ENCODE measurements at regions of chr4 and their contacts with region 1.

Region 1: DNA sequence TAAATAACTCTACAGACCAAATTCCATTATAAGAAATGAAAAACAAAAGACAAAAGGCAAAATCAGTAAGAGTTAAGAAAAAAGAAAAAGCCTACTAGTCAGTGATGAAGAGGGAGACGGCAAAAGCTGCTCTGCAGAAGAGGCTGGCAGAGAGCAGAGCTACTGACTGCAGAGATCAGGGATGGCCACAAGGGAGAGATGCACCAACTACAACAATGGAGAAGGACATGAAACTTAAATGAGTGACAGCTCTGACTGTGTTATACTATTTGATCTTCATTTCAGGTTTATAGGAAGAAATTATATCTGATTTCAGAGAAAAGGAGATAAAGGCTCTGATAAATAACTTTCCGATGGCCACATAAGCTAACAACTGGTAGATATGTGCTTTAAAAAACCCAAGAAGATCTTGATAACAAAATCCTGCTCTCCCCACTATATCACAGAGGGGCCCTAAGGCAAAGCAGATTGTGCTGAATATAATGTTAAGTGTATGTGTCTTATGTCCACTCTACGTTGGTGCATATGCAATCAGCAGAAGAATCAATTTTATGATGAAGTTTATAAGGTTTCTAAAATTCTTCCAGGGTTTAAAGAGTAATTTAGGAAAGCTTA is 58.4 kb upstream of the COX18 start:
- DNase-seq: no peak
- ATAC-seq: peak; percentile 44 to 57

Region 2: DNA sequence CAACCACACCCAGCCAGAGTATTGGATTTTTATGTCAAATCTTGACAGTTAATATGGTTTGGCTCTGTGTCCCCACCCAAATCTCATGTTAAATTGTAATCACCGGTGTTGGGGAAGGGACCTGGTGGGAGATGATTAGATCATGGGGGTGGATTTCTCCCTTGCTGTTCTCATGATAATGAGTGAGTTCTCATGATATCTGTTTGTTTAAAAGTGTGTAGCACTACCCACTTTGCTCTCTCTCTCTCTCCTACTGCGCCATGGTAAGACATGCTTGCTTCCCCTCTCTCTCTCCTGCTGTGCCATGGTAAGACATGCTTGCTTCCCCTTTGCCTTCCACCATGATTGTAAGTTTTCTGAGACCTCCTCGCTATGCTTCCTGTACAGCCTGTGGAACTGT is 28.4 kb after region 1 on chr4:
- intact Hi-C with region 1: loop called in 1 of 2 experiments (anchors 5 kb)
- DNase-seq: no peak
- ATAC-seq: no peak